ENCODE measurements at regions of chr22 and their contacts with region 1.

Region 1: GRCh38 chr22:39343259-39344048 is 6.3 kb upstream of the SYNGR1 start:
- DNase-seq: peak; percentile 40 to 56 (median 46)
- H3K4me3 ChIP-seq: no peak overlapping the region
- H3K4me3 Mint-ChIP-seq: no peak overlapping the region
- H3K27ac ChIP-seq: no peak overlapping the region
- H3K27ac Mint-ChIP-seq: no peak overlapping the region
- H3K4me1 ChIP-seq: peaks cover 5% of the 10 kb centered on the region
- H3K4me1 Mint-ChIP-seq: peaks cover 4 to 5% (median 4%) of the 10 kb centered on the region in 4 donors
- H3K27me3 ChIP-seq: no peaks in the 10 kb centered on the region
- H3K27me3 Mint-ChIP-seq: peaks cover 5 to 7% of the 10 kb centered on the region in 2 donors

Region 2: GRCh38 chr22:39068033-39068791 is 275.2 kb before region 1 on chr22:
- CTCF ChIA-PET with region 1: no interaction called
- POLR2A ChIA-PET with region 1: no interaction called
- intact Hi-C with region 1: no loop called
- DNase-seq: no peak
- H3K4me3 ChIP-seq: no peak overlapping the region
- H3K4me3 Mint-ChIP-seq: no peak overlapping the region
- H3K27ac ChIP-seq: no peak overlapping the region
- H3K27ac Mint-ChIP-seq: peak overlapping the region in 2 of 7 donors; percentile 30 to 37
- H3K4me1 ChIP-seq: peaks cover 7% of the 10 kb centered on the region
- H3K4me1 Mint-ChIP-seq: peaks cover 1 to 5% (median 4%) of the 10 kb centered on the region in 4 donors
- H3K27me3 ChIP-seq: no peaks in the 10 kb centered on the region
- H3K27me3 Mint-ChIP-seq: no peaks in the 10 kb centered on the region

Region 3: DNA sequence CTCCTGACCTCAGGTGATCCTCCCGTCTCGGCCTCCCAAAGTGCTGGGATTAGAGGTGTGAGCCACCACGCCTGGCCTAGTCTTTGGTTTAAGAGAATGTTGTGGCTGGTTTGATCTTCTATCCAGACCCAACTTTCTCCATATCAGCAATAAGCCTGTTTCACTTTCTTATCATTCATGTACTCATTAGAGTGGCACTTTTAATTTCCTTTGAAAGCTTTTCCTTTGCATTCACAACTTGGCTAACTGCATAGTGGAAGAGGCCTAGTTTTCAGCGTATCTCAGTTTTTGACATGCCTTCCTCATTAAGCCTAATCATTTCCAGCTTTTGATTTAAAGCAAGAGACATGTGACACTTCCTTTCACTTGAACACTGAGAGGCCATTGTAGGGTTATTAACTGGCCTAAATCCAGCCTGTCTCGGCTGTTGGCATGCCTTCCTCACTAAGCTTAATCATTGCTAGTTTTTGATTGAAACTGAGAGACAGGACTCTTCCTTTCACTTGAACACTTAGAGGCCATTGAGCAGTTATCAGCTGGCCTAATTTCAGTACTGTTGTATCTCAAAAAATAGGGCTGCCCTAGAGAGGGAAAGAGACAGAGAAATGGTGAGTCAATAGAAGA is 10.9 kb before region 1 on chr22:
- CTCF ChIA-PET with region 1: interaction called, 19 read pairs
- POLR2A ChIA-PET with region 1: interaction called, 4 read pairs
- intact Hi-C with region 1: no loop called
- DNase-seq: no peak
- H3K4me3 ChIP-seq: no peak overlapping the region
- H3K4me3 Mint-ChIP-seq: no peak overlapping the region
- H3K27ac ChIP-seq: no peak overlapping the region
- H3K27ac Mint-ChIP-seq: peak overlapping the region in 3 of 7 donors; percentile 23 to 64 (median 36)
- H3K4me1 ChIP-seq: no peaks in the 10 kb centered on the region
- H3K4me1 Mint-ChIP-seq: peaks cover 0 to 17% (median 4%) of the 10 kb centered on the region in 4 donors
- H3K27me3 ChIP-seq: no peaks in the 10 kb centered on the region
- H3K27me3 Mint-ChIP-seq: peaks cover 0 to 1% of the 10 kb centered on the region in 2 donors

Region 4: DNA sequence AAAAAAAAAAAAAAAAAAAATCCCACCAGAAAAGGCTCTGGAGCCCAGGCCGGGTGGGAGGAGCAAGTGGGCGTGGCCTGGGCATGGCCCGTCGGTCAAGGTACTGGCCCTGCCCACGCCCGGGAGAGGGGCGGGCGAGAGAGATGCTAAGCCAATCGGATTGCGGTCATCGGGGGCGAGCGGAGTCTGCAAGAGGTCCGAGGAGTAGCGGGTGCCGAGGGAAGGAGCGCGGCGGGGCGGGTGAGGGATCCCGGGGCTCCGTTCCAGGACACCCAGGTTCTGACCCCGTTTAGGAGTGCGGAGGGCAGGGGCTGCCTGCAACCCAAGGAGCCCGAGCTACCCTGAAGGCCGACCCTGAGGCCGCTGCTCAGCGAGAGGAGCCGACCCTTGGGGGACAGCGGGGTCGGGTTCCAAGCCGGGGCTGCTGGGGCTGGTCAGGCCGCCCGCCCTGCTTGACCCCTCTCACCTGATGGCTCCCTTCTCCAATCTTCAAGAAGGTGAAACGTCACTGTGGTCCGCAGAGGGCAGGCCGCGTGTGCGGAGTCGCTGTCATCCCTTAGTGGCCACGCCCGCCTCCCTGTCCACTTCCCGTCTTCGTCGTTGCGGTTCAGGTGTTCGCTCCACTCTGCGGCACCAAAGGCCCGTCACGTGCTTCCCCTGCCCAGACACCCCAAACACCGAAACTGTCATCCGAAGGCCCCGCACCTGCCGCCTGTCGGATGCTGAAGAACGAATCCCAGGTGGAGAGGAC is 45.0 kb after region 1 on chr22:
- CTCF ChIA-PET with region 1: no interaction called
- POLR2A ChIA-PET with region 1: no interaction called
- intact Hi-C with region 1: loop called (anchors 1 kb)
- DNase-seq: peak; percentile 25 to 93 (median 86)
- H3K4me3 ChIP-seq: peak overlapping the region; percentile 17 to 56
- H3K4me3 Mint-ChIP-seq: peak overlapping the region; percentile 63 to 94 (median 88)
- H3K27ac ChIP-seq: peak overlapping the region; percentile 67
- H3K27ac Mint-ChIP-seq: peak overlapping the region; percentile 29 to 97 (median 89)
- H3K4me1 ChIP-seq: peaks cover 9% of the 10 kb centered on the region
- H3K4me1 Mint-ChIP-seq: peaks cover 2 to 24% (median 11%) of the 10 kb centered on the region in 4 donors
- H3K27me3 ChIP-seq: no peaks in the 10 kb centered on the region
- H3K27me3 Mint-ChIP-seq: peaks cover 0 to 2% of the 10 kb centered on the region in 2 donors

Region 5: DNA sequence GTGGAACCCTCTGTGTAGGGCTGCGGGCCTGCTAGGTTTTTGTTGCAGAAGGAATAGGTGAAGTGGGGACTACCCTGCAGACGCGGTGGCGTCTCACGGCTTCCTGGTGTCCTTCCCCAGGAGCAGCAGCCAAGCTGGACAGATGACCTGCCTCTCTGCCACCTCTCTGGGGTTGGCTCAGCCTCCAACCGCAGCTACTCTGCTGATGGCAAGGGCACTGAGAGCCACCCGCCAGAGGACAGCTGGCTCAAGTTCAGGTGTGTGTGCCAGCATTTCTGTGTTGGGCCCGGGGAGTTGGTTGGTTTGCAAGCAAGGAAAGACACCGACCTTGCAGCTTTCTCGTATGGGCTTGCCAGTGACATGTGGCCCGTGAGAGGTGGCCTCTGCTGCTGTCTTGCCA is 71.4 kb after region 1 on chr22:
- CTCF ChIA-PET with region 1: no interaction called
- POLR2A ChIA-PET with region 1: no interaction called
- intact Hi-C with region 1: no loop called
- DNase-seq: no peak
- H3K4me3 ChIP-seq: no peak overlapping the region
- H3K4me3 Mint-ChIP-seq: no peak overlapping the region
- H3K27ac ChIP-seq: no peak overlapping the region
- H3K27ac Mint-ChIP-seq: peak overlapping the region in 1 of 7 donors; percentile 47
- H3K4me1 ChIP-seq: peaks cover 32% of the 10 kb centered on the region
- H3K4me1 Mint-ChIP-seq: peaks cover 22 to 40% (median 31%) of the 10 kb centered on the region in 4 donors
- H3K27me3 ChIP-seq: no peaks in the 10 kb centered on the region
- H3K27me3 Mint-ChIP-seq: no peaks in the 10 kb centered on the region